ENCODE measurements at regions of chr1 and their contacts with region 1.

Region 1: GRCh38 chr1:171501305-171502024 is 16.1 kb downstream of the PRRC2C start:
- DNase-seq: peak; percentile 15
- CTCF ChIP-seq: no peak

Region 2: DNA sequence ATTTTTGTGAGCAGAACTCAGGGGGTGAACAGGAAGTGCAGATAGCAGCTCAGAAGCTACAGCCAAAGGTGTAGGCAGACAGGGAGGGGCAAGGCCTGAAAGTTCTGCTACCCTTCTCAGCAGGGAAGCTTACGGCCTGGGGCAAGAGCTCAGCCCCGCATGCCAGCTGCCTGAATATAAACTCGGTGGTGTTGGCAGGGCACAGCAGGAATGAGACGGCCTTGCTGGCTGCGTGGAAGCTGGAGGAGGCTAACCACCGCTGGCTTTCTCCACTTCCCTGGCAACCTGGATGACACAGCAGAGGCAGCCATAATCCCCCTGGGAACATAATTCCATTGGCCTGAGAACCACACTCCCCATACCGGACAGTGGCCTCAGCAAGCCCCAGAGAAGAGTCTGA is 98.1 kb before region 1 on chr1:
- CTCF ChIA-PET with region 1: no interaction called
- POLR2A ChIA-PET with region 1: no interaction called
- DNase-seq: no peak
- CTCF ChIP-seq: no peak

Region 3: DNA sequence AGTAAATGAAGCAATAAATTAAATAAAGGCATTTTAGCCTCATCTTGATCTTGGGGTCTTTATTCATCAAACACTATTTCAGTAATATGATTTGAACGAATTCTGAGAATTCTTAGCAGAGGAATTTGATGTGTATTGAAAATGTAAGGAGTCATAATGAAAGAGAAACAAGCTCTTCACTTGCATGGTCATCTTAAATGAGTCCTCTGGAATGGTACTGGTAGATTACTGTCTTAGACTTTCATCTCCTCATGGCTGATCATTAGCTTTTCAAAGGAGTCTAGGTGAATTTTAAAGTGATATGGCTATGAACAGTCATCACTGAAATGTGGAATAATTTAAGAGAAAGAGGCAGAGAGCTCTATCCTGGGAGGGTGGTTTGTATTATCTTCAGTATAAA is 13.8 kb after region 1 on chr1:
- CTCF ChIA-PET with region 1: interaction called, 19 read pairs
- POLR2A ChIA-PET with region 1: no interaction called
- DNase-seq: no peak
- CTCF ChIP-seq: no peak

Region 4: DNA sequence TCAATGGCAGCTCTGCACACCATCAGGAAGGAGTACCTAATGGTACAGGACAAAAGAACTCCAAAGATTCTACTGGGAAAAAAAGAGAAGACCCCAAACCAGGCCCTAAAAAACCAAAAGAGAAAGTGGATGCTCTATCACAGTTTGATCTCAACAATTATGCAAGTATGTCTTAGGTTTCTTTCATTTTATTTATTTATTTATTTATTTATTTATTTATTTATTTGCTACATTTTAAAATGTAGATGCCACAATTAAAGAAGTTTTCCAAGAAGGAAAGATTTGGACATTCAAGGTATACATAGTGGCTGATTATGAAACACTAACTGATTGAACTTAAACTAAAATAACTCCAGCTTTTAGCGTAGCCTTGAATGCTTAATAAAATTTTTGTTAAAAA is 44.1 kb after region 1 on chr1:
- CTCF ChIA-PET with region 1: no interaction called
- POLR2A ChIA-PET with region 1: no interaction called
- DNase-seq: no peak
- CTCF ChIP-seq: no peak